ENCODE measurements at regions of chr12 and their contacts with region 1.

Region 1: GRCh38 chr12:32533971-32534590 is 134.7 kb downstream of the FGD4 start:
- DNase-seq: peak in 1 of 3 donors; percentile 24
- H3K4me3 ChIP-seq: peak overlapping the region; percentile 42 to 75 (median 50)
- H3K4me3 Mint-ChIP-seq: peak overlapping the region; percentile 81 to 91
- H3K27ac ChIP-seq: peak overlapping the region in 1 of 2 donors; percentile 86
- H3K27ac Mint-ChIP-seq: peak overlapping the region; percentile 86 to 96 (median 92)
- H3K4me1 ChIP-seq: peaks cover 29 to 49% of the 10 kb centered on the region in 2 donors
- H3K4me1 Mint-ChIP-seq: peaks cover 52% of the 10 kb centered on the region
- H3K27me3 ChIP-seq: no peaks in the 10 kb centered on the region
- H3K27me3 Mint-ChIP-seq: no peaks in the 10 kb centered on the region
- CTCF ChIP-seq: no peak

Region 2: GRCh38 chr12:32399337-32400113 is 134.6 kb before region 1 on chr12 and contains the start of gene FGD4:
- intact Hi-C with region 1: loop called in 1 of 2 experiments (anchors 5 kb)
- DNase-seq: peak; percentile 72 to 76 (median 76)
- H3K4me3 ChIP-seq: peak within 1 kb of the TSS; percentile 54 to 85 (median 55)
- H3K4me3 Mint-ChIP-seq: peak within 1 kb of the TSS; percentile 97 to 99
- H3K27ac ChIP-seq: no peak within 1 kb of the TSS
- H3K27ac Mint-ChIP-seq: peak within 1 kb of the TSS in 4 of 7 donors; percentile 28 to 79 (median 60)
- H3K4me1 ChIP-seq: peaks cover 30 to 62% of the 10 kb centered on the region in 2 donors
- H3K4me1 Mint-ChIP-seq: peaks cover 51% of the 10 kb centered on the region
- H3K27me3 ChIP-seq: peaks cover 0 to 24% of the 10 kb centered on the region in 2 donors
- H3K27me3 Mint-ChIP-seq: peaks cover 12 to 32% (median 30%) of the 10 kb centered on the region in 3 donors
- CTCF ChIP-seq: peak; percentile 19
- polyA plus RNA-seq, gene FGD4: 5.3 to 34.4 (median 6.0) TPM

Region 3: GRCh38 chr12:32568241-32568640 is 34.2 kb after region 1 on chr12:
- intact Hi-C with region 1: no loop called
- DNase-seq: no peak
- H3K4me3 ChIP-seq: no peak overlapping the region
- H3K4me3 Mint-ChIP-seq: no peak overlapping the region
- H3K27ac ChIP-seq: peak overlapping the region in 1 of 2 donors; percentile 8
- H3K27ac Mint-ChIP-seq: no peak overlapping the region
- H3K4me1 ChIP-seq: peaks cover 7 to 11% of the 10 kb centered on the region in 2 donors
- H3K4me1 Mint-ChIP-seq: peaks cover 11% of the 10 kb centered on the region
- H3K27me3 ChIP-seq: no peaks in the 10 kb centered on the region
- H3K27me3 Mint-ChIP-seq: no peaks in the 10 kb centered on the region
- CTCF ChIP-seq: no peak

Region 4: GRCh38 chr12:32586390-32586789 is 52.3 kb after region 1 on chr12:
- intact Hi-C with region 1: loop called in 1 of 2 experiments (anchors 10 kb)
- DNase-seq: peak in 1 of 3 donors; percentile 73
- H3K4me3 ChIP-seq: no peak overlapping the region
- H3K4me3 Mint-ChIP-seq: no peak overlapping the region
- H3K27ac ChIP-seq: peak overlapping the region in 1 of 2 donors; percentile 71
- H3K27ac Mint-ChIP-seq: peak overlapping the region; percentile 26 to 92 (median 81)
- H3K4me1 ChIP-seq: peaks cover 63 to 80% of the 10 kb centered on the region in 2 donors
- H3K4me1 Mint-ChIP-seq: peaks cover 76% of the 10 kb centered on the region
- H3K27me3 ChIP-seq: no peaks in the 10 kb centered on the region
- H3K27me3 Mint-ChIP-seq: peaks cover 0 to 7% (median 0%) of the 10 kb centered on the region in 3 donors
- CTCF ChIP-seq: no peak

Measured in CD14-positive monocyte (primary cell).